PC-9 (cell line): ENCODE measurements at regions of chr4 and their contacts with region 1.

Region 1: DNA sequence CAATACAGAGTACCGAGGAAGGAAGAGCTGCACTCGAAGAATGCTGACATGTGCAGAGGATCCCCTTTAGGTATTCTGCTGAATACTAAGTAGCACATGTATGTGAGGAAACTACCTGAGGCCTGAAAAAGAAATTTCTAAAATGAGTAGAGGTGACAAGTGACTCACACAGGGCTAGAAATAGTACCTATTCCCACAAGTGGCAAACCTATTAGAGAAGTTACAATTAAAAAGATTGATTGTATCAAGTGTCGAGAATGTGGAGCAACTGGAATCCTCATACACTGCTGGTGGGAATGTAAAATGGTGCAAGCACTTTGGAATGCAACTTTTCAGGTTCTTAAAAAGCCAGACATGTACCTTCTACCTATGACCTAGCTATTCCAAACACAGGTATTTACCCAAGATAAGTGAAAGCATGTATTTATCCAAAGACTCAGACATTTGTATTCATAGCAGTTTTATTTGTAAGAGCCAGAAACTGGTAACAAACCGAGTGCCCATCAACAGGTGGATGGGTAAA is 47.5 kb downstream of the CCSER1 start:
- DNase-seq: peak; percentile 16 to 90
- H3K4me3 ChIP-seq: no peak overlapping the region; the same call in 1 of the 2 replicates
- H3K27ac ChIP-seq: peak overlapping the region; percentile 83
- H3K4me1 ChIP-seq: peaks cover 25% of the 10 kb centered on the region
- H3K27me3 ChIP-seq: no peaks in the 10 kb centered on the region
- CTCF ChIP-seq: no peak

Region 2: DNA sequence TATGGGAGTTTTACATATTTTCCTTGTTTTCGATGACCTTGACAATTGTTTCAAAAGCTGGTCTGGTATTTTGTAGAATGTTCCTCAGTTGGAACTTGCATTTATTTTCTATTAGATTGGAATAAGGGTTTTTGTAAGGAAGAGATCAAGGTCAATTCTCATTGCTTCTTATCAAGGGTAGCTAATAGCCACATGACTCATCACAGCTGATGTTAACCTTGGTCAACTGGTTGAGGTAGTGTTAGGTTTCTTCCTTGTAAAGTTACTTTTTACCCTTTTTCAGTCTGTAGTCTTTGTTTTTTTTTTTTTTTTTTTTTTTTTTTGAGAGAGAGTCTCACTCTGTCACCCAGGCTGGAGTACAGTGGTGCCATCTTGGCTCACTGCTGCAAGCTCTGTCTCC is 594.9 kb before region 1 on chr4:
- CTCF ChIA-PET with region 1: no interaction called
- POLR2A ChIA-PET with region 1: interaction called, 28 read pairs
- intact Hi-C with region 1: no loop called
- DNase-seq: no peak
- H3K4me3 ChIP-seq: no peak overlapping the region
- H3K27ac ChIP-seq: no peak overlapping the region
- H3K4me1 ChIP-seq: no peaks in the 10 kb centered on the region
- H3K27me3 ChIP-seq: no peaks in the 10 kb centered on the region
- CTCF ChIP-seq: no peak

Region 3: DNA sequence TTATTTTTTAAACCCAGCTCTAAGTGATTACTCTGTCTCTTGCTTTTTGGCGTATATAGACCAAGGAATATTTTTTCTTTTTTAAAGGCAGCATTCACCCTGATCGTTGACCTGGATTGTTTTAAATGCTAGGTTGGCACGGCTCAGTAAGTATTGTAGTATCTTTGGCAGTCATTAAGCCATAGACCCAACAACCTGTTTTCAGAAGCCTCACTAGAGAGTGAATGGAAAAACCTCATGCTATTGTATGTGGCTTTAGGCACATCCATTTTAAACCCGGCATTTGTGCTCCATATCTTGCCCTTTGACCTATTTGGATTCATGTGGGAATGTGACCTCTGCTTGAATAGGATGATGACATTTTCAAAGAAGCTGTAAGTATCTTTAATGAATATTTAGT is 521.7 kb before region 1 on chr4:
- CTCF ChIA-PET with region 1: no interaction called
- POLR2A ChIA-PET with region 1: no interaction called
- intact Hi-C with region 1: no loop called
- DNase-seq: no peak
- H3K4me3 ChIP-seq: no peak overlapping the region
- H3K27ac ChIP-seq: no peak overlapping the region
- H3K4me1 ChIP-seq: no peaks in the 10 kb centered on the region
- H3K27me3 ChIP-seq: no peaks in the 10 kb centered on the region
- CTCF ChIP-seq: no peak